Naive thymus-derived CD4-positive, alpha-beta T cell (primary cell): ENCODE measurements at regions of chr2 and their contacts with region 1.

Region 1: DNA sequence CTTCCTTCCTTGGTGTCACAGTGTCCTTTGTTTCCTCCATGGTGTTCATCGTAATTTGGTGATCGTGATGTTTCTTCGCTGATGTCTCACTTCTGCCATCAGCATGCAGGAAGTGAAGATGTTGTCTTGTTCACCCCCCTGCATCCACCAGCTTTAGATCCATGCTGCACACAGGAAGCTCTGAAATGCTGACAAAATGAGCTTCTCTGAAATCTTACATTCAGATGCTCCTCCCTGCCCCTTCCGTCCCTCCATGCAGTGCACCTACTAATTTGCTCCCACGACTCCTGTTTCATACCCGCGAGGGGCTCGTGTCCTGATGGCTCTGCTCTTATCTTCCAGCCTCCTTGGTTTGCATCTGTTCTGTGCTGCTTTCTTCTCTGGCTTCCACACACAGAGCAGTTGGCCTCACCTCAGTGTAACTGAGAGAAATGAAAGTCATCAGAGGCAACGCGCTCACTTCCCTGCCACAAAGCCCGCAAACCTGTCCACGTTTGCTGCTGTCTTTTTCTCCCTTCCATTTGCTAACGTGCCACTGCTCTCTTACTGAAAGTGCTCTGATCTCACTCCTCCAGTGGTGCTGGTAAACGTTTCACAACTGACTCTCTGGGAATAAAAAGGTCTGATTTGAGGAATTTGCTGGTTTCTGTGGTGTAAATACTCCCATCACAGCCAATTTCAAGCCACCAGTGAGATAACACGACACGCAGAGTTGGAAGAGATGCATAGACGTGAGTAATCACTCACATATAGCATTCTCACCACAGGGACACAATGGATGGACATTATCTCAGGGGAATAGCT is 41.0 kb upstream of the MGAT4A start:
- DNase-seq: peak; percentile 38 to 93 (median 89)
- ATAC-seq: peak; percentile 83
- H3K4me3 ChIP-seq: peak overlapping the region; percentile 43
- H3K4me3 Mint-ChIP-seq: peak overlapping the region; percentile 82 to 99 (median 91)
- H3K27ac ChIP-seq: peak overlapping the region; percentile 84
- H3K27ac Mint-ChIP-seq: peak overlapping the region; percentile 95 to 99 (median 98)
- H3K4me1 ChIP-seq: peaks cover 59 to 67% of the 10 kb centered on the region in 2 donors
- H3K4me1 Mint-ChIP-seq: peaks cover 56 to 95% (median 86%) of the 10 kb centered on the region in 7 donors
- H3K27me3 ChIP-seq: no peaks in the 10 kb centered on the region
- H3K27me3 Mint-ChIP-seq: no peaks in the 10 kb centered on the region

Region 2: GRCh38 chr2:97995734-97996624 is 775.9 kb before region 1 on chr2 and contains the start of gene TMEM131:
- CTCF ChIA-PET with region 1: no interaction called
- POLR2A ChIA-PET with region 1: no interaction called
- intact Hi-C with region 1: loop called in 1 of 2 experiments (anchors 2 kb)
- DNase-seq: peak; percentile 89 to 98 (median 95)
- ATAC-seq: peak; percentile 93
- H3K4me3 ChIP-seq: peak within 1 kb of the TSS; percentile 90
- H3K4me3 Mint-ChIP-seq: peak within 1 kb of the TSS; percentile 85 to 98 (median 96)
- H3K27ac ChIP-seq: peak within 1 kb of the TSS; percentile 96
- H3K27ac Mint-ChIP-seq: peak within 1 kb of the TSS; percentile 86 to 95 (median 93)
- H3K4me1 ChIP-seq: peaks cover 14 to 17% of the 10 kb centered on the region in 2 donors
- H3K4me1 Mint-ChIP-seq: peaks cover 20 to 40% (median 38%) of the 10 kb centered on the region in 7 donors
- H3K27me3 ChIP-seq: no peaks in the 10 kb centered on the region
- H3K27me3 Mint-ChIP-seq: peaks cover 0 to 4% (median 0%) of the 10 kb centered on the region in 5 donors
- total RNA-seq, gene TMEM131: 39.7 to 46.4 (median 43.6) TPM

Region 3: GRCh38 chr2:98654699-98655495 is 117.0 kb before region 1 on chr2:
- CTCF ChIA-PET with region 1: interaction called, 6 read pairs
- POLR2A ChIA-PET with region 1: interaction called, 140 read pairs
- intact Hi-C with region 1: loop called (anchors 1 to 2 kb)
- DNase-seq: peak in 7 of 9 donors; percentile 52 to 80 (median 75)
- ATAC-seq: peak; percentile 72
- H3K4me3 ChIP-seq: peak overlapping the region; percentile 4
- H3K4me3 Mint-ChIP-seq: peak overlapping the region; percentile 40 to 81 (median 69)
- H3K27ac ChIP-seq: peak overlapping the region; percentile 79
- H3K27ac Mint-ChIP-seq: peak overlapping the region; percentile 76 to 99 (median 93)
- H3K4me1 ChIP-seq: peaks cover 64 to 85% of the 10 kb centered on the region in 2 donors
- H3K4me1 Mint-ChIP-seq: peaks cover 50 to 97% (median 88%) of the 10 kb centered on the region in 7 donors
- H3K27me3 ChIP-seq: no peaks in the 10 kb centered on the region
- H3K27me3 Mint-ChIP-seq: no peaks in the 10 kb centered on the region

Region 4: DNA sequence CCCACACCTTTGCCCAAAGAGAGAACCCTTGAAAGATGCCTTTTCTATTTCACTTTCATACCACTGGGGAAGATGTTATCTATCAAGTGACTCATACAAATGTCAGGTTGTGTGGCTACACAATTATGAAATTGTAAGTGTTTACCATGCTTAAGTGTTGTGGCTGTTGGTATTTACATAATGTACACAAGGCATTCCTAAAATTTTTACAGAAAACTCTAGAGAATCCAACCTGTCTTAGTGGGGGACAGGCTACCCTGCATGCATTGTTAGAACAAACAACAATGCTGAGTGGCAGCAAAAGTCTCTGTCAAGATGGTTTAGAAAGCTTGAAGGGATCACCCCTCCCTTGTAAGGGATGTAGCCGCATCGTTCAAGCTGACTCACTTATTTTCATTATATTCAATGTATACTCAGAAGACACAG is 35.4 kb before region 1 on chr2:
- CTCF ChIA-PET with region 1: interaction called, 13 read pairs
- POLR2A ChIA-PET with region 1: interaction called, 604 read pairs
- intact Hi-C with region 1: loop called in 1 of 2 experiments (anchors 1 kb)
- DNase-seq: peak in 2 of 9 donors; percentile 33 to 37
- ATAC-seq: peak; percentile 16
- H3K4me3 ChIP-seq: peak overlapping the region; percentile 13
- H3K4me3 Mint-ChIP-seq: peak overlapping the region; percentile 30 to 75 (median 54)
- H3K27ac ChIP-seq: peak overlapping the region; percentile 25
- H3K27ac Mint-ChIP-seq: peak overlapping the region; percentile 68 to 93 (median 89)
- H3K4me1 ChIP-seq: peaks cover 35 to 66% of the 10 kb centered on the region in 2 donors
- H3K4me1 Mint-ChIP-seq: peaks cover 46 to 93% (median 87%) of the 10 kb centered on the region in 7 donors
- H3K27me3 ChIP-seq: no peaks in the 10 kb centered on the region
- H3K27me3 Mint-ChIP-seq: no peaks in the 10 kb centered on the region

Region 5: DNA sequence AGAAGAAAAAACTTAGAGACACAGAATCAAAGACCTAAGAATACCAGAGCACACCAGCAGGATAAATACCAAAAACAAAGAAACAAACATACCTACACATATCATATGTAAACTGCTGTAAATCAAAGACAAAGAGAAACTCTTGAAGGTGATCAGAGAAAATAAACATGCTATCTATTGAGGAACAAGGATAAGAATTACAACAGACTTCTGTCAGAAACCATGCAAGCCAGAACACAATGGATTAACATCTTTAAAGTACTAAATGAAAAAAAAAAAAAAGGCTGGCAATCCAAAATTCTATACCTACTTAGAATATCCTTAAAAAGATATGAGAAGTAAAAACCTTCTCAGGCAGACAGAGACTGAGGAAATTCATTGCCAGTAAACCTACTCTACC is 10.6 kb after region 1 on chr2:
- CTCF ChIA-PET with region 1: interaction called, 5 read pairs
- POLR2A ChIA-PET with region 1: interaction called, 11 read pairs
- intact Hi-C with region 1: no loop called
- DNase-seq: no peak
- ATAC-seq: no peak
- H3K4me3 ChIP-seq: no peak overlapping the region
- H3K4me3 Mint-ChIP-seq: no peak overlapping the region
- H3K27ac ChIP-seq: no peak overlapping the region
- H3K27ac Mint-ChIP-seq: peak overlapping the region in 1 of 9 donors; percentile 57
- H3K4me1 ChIP-seq: no peaks in the 10 kb centered on the region
- H3K4me1 Mint-ChIP-seq: peaks cover 0 to 2% (median 0%) of the 10 kb centered on the region in 7 donors
- H3K27me3 ChIP-seq: no peaks in the 10 kb centered on the region
- H3K27me3 Mint-ChIP-seq: peaks cover 0 to 3% (median 0%) of the 10 kb centered on the region in 5 donors

Region 6: GRCh38 chr2:98828793-98829371 is 57.0 kb after region 1 on chr2:
- CTCF ChIA-PET with region 1: interaction called, 3 read pairs
- POLR2A ChIA-PET with region 1: interaction called, 31 read pairs
- intact Hi-C with region 1: loop called in 1 of 2 experiments (anchors 2 kb)
- DNase-seq: peak in 1 of 9 donors; percentile 28
- ATAC-seq: peak; percentile 28
- H3K4me3 ChIP-seq: no peak overlapping the region
- H3K4me3 Mint-ChIP-seq: peak overlapping the region in 9 of 10 donors; percentile 7 to 79 (median 62)
- H3K27ac ChIP-seq: no peak overlapping the region
- H3K27ac Mint-ChIP-seq: peak overlapping the region; percentile 60 to 93 (median 79)
- H3K4me1 ChIP-seq: peaks cover 25 to 39% of the 10 kb centered on the region in 2 donors
- H3K4me1 Mint-ChIP-seq: peaks cover 39 to 73% (median 48%) of the 10 kb centered on the region in 7 donors
- H3K27me3 ChIP-seq: no peaks in the 10 kb centered on the region
- H3K27me3 Mint-ChIP-seq: peaks cover 0 to 2% (median 0%) of the 10 kb centered on the region in 5 donors

Region 7: GRCh38 chr2:99154643-99155536 is 383.0 kb after region 1 on chr2 and contains the starts of genes LIPT1 and TSGA10:
- CTCF ChIA-PET with region 1: no interaction called
- POLR2A ChIA-PET with region 1: interaction called, 4 read pairs
- intact Hi-C with region 1: loop called in 1 of 2 experiments (anchors 10 kb)
- DNase-seq: peak; percentile 80 to 95 (median 92)
- ATAC-seq: peak; percentile 98
- H3K4me3 ChIP-seq: peak within 1 kb of the TSS; percentile 83
- H3K4me3 Mint-ChIP-seq: peak within 1 kb of the TSS in 1 of 10 donors; percentile 93
- H3K27ac ChIP-seq: peak within 1 kb of the TSS; percentile 92
- H3K27ac Mint-ChIP-seq: peak within 1 kb of the TSS in 2 of 9 donors; percentile 96 to 97
- H3K4me1 ChIP-seq: peaks cover 15 to 18% of the 10 kb centered on the region in 2 donors
- H3K4me1 Mint-ChIP-seq: peaks cover 25 to 57% (median 42%) of the 10 kb centered on the region in 7 donors
- H3K27me3 ChIP-seq: no peaks in the 10 kb centered on the region
- H3K27me3 Mint-ChIP-seq: no peaks in the 10 kb centered on the region
- total RNA-seq, gene LIPT1: 7.7 to 24.1 (median 15.9) TPM
- total RNA-seq, gene TSGA10: 3.5 to 31.7 (median 12.6) TPM